Colonic mucosa (tissue), 4 donors: ENCODE measurements at regions of chr1 and their contacts with region 1.

Region 1: GRCh38 chr1:203440771-203441170 is 34.8 kb upstream of the PRELP start:
- DNase-seq: peak; percentile 79
- H3K4me3 ChIP-seq: no peak overlapping the region
- H3K27ac ChIP-seq: no peak overlapping the region
- H3K4me1 ChIP-seq: peaks cover 4% of the 10 kb centered on the region
- H3K27me3 ChIP-seq: no peaks in the 10 kb centered on the region
- CTCF ChIP-seq: peak; percentile 49

Region 2: GRCh38 chr1:203273206-203273868 is 167.4 kb before region 1 on chr1:
- intact Hi-C with region 1: loop called (anchors 2 kb)
- DNase-seq: peak; percentile 93
- H3K4me3 ChIP-seq: peak overlapping the region; percentile 24
- H3K27ac ChIP-seq: peak overlapping the region; percentile 58
- H3K4me1 ChIP-seq: no peaks in the 10 kb centered on the region
- H3K27me3 ChIP-seq: no peaks in the 10 kb centered on the region
- CTCF ChIP-seq: peak; percentile 92

Region 3: DNA sequence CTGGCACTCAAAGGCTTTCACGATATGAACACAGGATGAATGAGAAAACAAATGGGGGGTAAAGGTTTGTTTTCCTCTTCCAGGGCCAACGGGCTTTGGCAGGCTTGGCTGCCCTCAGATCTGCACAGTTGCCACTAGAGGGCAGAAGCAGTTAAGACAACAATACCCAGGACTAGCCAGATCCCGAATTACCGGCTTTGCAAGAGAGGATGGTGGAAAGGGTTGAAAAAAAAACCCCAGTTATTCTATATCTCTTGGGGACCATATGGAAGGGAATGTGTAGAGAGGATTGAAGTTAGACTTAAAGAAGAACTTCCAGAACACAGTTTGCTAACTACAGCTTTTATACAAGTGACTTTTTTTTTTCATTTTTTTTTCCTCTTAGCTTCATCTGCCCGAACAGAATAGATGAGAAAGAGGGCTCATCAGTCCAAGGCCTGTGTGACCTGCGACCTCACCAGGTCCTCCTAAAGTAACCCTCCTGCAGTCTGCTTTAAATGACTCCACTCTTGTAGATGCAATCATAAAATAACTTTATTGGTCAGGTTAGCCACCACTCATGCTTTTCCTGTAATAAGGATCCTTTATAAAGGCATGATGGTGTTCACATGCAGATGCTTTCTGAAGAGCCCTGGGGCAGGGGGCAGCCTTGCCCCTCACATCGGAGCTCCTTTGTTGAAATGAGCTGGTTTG is 100.5 kb before region 1 on chr1:
- intact Hi-C with region 1: loop called (anchors 2 kb)
- DNase-seq: peak; percentile 84
- H3K4me3 ChIP-seq: no peak overlapping the region
- H3K27ac ChIP-seq: no peak overlapping the region
- H3K4me1 ChIP-seq: no peaks in the 10 kb centered on the region
- H3K27me3 ChIP-seq: no peaks in the 10 kb centered on the region
- CTCF ChIP-seq: peak; percentile 83

Region 4: DNA sequence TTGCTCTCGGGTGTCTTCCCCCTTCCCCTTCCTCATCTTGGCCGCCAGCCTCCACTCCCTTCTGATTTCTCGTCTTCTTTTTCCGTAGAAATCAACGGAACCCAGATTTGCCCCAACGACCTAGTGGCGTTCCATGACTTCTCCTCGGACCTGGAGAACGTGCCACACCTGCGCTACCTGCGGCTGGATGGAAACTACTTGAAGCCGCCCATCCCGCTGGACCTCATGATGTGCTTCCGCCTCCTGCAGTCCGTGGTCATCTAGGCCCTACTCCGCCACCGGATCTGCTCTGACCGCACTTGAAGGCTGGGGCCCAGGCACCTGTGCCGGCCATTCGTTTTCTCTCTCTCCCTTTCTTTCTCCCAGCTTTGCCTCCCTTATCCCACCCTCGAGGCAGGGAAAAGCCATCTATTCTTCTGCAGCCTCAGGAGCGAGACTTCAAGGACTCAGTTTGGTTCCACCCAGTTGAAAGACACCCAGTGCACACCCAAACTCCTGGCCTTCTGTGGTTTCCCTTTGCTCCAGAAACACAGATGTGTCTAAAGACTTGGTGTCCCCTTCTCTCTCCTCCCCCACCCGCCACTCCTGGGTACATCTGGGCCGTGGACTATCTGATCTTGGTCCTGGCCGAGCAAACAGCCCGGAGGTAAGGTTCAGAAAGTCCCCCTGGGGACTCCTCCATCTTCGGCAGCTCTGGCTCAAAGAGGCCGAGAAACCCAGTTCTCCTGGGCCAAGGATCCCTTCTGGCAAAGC is 46.0 kb after region 1 on chr1:
- intact Hi-C with region 1: loop called (anchors 2 kb)
- DNase-seq: no peak
- H3K4me3 ChIP-seq: no peak overlapping the region
- H3K27ac ChIP-seq: peak overlapping the region; percentile 56
- H3K4me1 ChIP-seq: peaks cover 3% of the 10 kb centered on the region
- H3K27me3 ChIP-seq: no peaks in the 10 kb centered on the region
- CTCF ChIP-seq: no peak

Region 5: DNA sequence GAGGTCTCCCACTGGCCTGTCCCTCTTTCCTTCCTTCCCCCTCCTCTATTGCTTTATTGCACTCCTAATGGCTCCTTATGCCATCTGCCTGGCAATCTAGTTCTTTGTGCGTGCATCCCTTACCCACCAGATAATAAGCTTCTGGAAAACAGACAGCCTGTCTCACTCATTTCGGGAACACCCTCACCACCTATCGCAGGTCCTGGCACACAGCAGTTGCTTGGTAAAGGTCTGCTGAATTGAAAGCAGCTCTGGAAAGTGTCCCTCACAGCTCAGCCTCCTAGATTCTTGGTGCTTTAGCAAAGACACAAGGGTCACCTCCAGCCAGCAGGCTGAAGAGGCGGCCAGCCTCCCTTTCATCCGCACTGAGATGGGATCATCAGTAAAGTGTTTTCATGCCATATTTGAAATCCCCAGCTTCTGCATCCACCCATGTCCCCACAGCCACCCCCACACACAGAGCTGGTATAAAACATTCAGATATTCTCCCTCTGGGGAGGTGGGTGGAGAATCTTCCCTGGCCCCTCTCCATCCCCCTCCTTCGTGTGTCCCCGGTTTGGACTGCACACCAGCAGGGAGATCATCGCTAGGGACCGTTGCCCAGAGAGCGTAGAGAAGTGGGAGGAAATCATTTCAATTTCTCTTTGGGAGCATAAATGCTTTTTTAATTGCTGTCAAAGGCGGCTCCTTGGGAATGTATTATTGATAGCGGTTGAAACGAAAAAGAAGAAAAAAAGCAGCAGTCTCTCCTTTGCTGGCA is 156.7 kb after region 1 on chr1:
- intact Hi-C with region 1: no loop called
- DNase-seq: no peak
- H3K4me3 ChIP-seq: no peak overlapping the region
- H3K27ac ChIP-seq: no peak overlapping the region
- H3K4me1 ChIP-seq: no peaks in the 10 kb centered on the region
- H3K27me3 ChIP-seq: no peaks in the 10 kb centered on the region
- CTCF ChIP-seq: no peak